Activated CD4-positive, alpha-beta memory T cell treated with anti-CD3 and anti-CD28 coated beads for 36 hours (primary cell): ENCODE measurements at regions of chr2 and their contacts with region 1.

Region 1: DNA sequence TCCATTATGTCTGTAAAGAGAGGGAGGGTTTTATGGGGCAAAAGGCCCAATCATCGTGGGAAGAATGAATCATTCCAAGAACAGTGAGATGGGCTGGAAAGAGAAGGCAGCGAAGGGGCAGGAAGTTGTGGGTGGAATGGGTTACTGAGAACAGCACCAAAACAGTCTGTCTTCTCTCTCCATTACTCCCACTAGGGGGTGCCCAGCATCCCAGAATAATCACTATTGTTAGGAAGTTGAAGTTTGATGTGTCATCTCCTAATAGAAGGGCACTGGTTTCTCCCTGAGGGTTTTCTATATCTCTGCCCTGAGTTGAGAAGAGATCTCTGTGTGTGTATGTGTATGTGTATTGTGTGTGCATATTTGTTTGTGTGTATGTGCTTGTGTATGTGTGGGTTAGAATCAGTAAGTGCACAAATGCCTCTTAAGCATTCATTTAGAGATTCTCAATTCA is 76.6 kb upstream of the MAP4K3 start:
- DNase-seq: peak; percentile 85
- H3K4me3 Mint-ChIP-seq: peak overlapping the region; percentile 0
- H3K27ac Mint-ChIP-seq: peak overlapping the region; percentile 70
- H3K4me1 Mint-ChIP-seq: peaks cover 31% of the 10 kb centered on the region
- H3K27me3 Mint-ChIP-seq: peaks cover 7% of the 10 kb centered on the region

Region 2: GRCh38 chr2:39216346-39217191 is 297.1 kb before region 1 on chr2:
- CTCF ChIA-PET with region 1: no interaction called
- POLR2A ChIA-PET with region 1: no interaction called
- intact Hi-C with region 1: loop called (anchors 1 kb)
- DNase-seq: peak; percentile 79
- H3K4me3 Mint-ChIP-seq: peak overlapping the region; percentile 38
- H3K27ac Mint-ChIP-seq: peak overlapping the region; percentile 85
- H3K4me1 Mint-ChIP-seq: peaks cover 56% of the 10 kb centered on the region
- H3K27me3 Mint-ChIP-seq: no peaks in the 10 kb centered on the region

Region 3: DNA sequence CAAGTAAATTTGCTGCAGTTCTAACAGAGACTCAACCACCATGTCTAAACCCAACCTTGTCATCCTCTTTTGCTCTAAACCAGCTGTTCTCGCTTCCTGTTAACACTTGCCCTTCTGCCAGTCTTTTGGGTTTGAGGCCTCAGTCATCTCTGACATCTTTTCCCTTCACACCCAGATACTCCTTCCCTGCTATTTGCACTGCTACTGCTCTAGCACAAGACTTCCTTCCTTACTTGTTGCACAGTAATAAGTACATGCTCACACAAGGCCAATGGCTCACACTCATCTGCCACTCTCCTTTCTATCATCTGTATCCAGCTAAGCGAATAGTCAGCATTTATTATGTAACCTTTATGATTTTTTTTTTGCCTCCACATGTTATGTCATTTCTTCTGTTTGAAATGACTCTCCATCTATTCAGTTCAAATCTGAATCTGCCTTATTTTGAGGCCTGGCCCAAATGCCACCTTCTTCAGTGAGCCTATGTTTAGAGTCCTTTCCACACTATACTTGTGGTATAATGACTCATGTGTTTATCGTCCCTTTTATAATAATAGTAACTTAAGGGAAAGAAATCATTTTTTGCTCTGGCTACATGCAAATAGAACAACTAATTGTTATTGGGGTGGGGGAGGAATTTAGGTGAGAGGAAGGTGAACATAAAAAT is 247.4 kb before region 1 on chr2:
- CTCF ChIA-PET with region 1: no interaction called
- POLR2A ChIA-PET with region 1: no interaction called
- intact Hi-C with region 1: no loop called
- DNase-seq: peak; percentile 28
- H3K4me3 Mint-ChIP-seq: no peak overlapping the region
- H3K27ac Mint-ChIP-seq: peak overlapping the region; percentile 21
- H3K4me1 Mint-ChIP-seq: peaks cover 22% of the 10 kb centered on the region
- H3K27me3 Mint-ChIP-seq: no peaks in the 10 kb centered on the region

Region 4: GRCh38 chr2:39408316-39409136 is 105.1 kb before region 1 on chr2:
- CTCF ChIA-PET with region 1: no interaction called
- POLR2A ChIA-PET with region 1: interaction called, 3 read pairs
- intact Hi-C with region 1: loop called (anchors 2 kb)
- DNase-seq: no peak
- H3K4me3 Mint-ChIP-seq: no peak overlapping the region
- H3K27ac Mint-ChIP-seq: no peak overlapping the region
- H3K4me1 Mint-ChIP-seq: peaks cover 69% of the 10 kb centered on the region
- H3K27me3 Mint-ChIP-seq: no peaks in the 10 kb centered on the region

Region 5: DNA sequence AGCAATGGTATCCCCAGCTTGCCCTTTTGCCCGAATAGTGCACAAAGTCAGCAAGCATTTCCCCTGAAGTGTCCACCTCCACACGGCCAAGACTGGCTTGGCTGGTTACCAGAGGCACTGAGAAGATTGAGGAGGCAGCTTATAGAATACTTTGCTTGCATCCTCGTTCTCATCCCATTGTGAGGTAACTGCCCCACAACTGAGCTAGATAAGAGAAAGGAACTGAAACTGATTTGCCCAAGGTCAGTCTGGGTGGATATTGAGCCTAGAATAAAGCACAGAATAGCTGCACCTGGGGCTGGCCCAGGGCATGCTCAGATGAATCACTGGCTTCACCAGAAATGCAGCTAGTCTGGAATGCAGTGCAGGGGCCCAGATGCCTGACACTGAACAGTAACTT is 43.9 kb before region 1 on chr2:
- CTCF ChIA-PET with region 1: no interaction called
- POLR2A ChIA-PET with region 1: no interaction called
- intact Hi-C with region 1: loop called (anchors 1 kb)
- DNase-seq: peak; percentile 36
- H3K4me3 Mint-ChIP-seq: no peak overlapping the region
- H3K27ac Mint-ChIP-seq: no peak overlapping the region
- H3K4me1 Mint-ChIP-seq: peaks cover 31% of the 10 kb centered on the region
- H3K27me3 Mint-ChIP-seq: no peaks in the 10 kb centered on the region

Region 6: DNA sequence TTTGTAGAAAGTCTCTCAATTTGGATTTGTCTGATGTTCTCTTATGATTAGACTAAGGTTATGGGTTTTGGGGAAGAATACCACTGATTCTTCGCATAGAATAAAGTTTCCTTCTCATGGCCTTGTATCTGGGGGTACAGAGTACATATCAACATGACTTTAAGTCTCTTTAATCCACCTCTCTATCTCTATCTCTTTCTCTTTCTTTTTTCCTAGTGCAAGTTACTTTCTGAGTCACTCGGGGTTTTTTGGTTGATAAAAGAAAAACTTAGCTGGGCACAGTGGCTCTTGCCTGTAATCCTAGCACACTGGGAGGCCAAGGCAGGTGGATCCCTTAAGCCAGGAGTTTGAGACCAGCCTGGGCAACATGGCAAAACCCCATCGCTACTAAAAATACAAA is 23.5 kb after region 1 on chr2:
- CTCF ChIA-PET with region 1: no interaction called
- POLR2A ChIA-PET with region 1: no interaction called
- intact Hi-C with region 1: loop called (anchors 1 kb)
- DNase-seq: no peak
- H3K4me3 Mint-ChIP-seq: no peak overlapping the region
- H3K27ac Mint-ChIP-seq: no peak overlapping the region
- H3K4me1 Mint-ChIP-seq: peaks cover 9% of the 10 kb centered on the region
- H3K27me3 Mint-ChIP-seq: peaks cover 9% of the 10 kb centered on the region

Region 7: GRCh38 chr2:39728941-39729351 is 215.3 kb after region 1 on chr2:
- CTCF ChIA-PET with region 1: interaction called, 6 read pairs
- POLR2A ChIA-PET with region 1: interaction called, 3 read pairs
- intact Hi-C with region 1: loop called (anchors 5 kb)
- DNase-seq: peak; percentile 50
- H3K4me3 Mint-ChIP-seq: no peak overlapping the region
- H3K27ac Mint-ChIP-seq: no peak overlapping the region
- H3K4me1 Mint-ChIP-seq: peaks cover 9% of the 10 kb centered on the region
- H3K27me3 Mint-ChIP-seq: peaks cover 3% of the 10 kb centered on the region